GM18951 (cell line): ENCODE measurements at regions of chr6 and their contacts with region 1.

Region 1: DNA sequence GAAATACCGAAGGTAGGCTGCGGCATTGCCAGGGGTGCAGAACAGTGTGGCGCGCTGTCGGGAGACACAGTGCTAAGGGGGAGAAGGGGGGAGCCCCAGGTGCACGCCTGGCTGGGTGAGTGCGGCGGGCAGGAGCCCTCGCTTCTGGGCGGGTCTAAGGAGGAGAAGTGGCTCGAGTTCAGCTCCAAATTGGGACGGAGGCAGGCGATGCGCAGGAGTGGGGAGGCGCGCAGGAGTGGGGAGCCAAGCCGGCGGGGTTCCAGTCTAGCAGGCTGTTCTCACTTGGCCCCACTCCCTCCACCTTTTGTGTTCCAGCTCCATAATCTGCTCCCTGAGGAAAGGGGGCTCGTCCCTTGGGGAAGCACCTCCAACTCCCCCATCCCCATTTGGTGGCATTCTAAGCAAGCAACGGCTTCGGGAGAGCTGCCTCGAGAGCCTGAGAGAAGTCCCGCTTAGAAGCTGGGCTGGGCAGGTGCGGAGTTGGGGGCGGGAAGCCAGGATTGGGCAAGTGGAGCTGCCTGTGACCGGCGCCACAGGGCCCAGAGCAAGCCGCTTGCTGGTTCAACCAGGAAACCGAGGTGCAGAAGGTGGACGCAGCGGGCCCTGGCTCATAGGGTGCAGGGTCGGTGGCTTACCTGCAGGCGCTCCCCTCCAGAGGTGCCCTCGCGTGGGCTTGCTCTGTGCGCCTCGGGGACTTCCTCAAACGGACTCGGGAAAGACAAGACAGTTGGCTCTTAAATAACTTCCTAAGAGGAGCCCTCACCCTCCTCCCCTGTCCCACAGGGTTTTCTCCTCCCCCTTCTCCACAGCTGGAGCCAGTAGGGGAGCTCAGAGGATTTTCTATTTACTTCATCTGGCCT is at the start of gene F13A1:
- POLR2A ChIP-seq: peak; percentile 30

Region 2: DNA sequence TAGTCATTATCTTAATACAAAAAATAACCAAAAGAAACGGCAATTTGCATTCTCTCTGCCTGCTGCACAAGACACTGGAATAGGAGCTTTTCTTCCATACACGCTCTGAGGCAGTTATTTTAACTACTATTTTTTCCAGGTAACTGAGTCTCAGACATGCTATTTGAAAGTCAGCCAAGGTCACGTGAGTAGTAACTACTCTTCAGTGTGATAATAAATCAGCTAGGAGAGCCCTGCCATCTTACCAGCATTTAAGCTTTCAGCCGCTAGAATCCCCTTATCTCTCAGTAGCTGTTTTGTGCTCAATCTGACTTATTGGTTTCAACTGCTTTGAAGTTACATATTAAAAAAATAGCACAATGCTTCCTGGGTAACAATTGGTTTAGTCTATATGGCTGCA is 398.0 kb before region 1 on chr6:
- in situ Hi-C with region 1: no loop called
- POLR2A ChIP-seq: no peak

Region 3: DNA sequence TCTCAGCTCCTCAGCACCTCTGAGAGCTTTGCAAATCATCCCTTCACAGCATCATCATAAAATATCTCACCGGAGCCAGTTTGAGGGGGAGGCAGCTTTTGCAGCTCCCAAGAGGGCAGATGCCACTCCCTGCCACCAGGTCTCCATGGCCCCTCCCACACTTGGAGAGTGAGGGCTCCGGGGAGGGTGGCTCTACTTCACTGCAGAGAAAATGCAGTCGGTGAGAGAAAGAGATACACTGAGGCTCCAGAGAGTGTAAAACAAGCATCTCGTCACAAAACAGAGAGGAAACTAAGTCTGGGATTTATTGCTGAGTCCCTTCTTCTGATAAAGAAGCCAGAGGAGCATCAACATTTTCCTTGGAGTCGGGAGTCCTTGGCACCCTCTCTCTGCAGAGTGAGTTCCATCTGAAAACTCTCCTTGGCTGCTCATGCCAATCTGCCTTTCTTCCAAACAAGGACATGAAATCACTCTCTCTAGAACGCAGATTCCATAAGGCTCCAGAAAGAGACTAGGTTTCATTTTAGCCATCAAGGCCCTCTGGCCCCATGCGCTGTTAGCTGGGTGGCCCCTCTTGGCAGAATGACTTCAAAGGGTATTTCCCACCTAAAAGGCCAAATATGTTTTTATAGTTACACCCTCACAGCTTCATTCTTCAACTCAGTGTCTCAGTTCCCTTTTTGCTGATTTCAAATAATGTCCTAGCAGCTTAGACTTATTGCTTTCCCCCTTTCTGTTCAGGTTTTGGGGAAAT is 70.8 kb after region 1 on chr6:
- in situ Hi-C with region 1: loop called (anchors 10 kb)
- POLR2A ChIP-seq: peak; percentile 15

Region 4: GRCh38 chr6:6629402-6629801 is 309.2 kb after region 1 on chr6:
- in situ Hi-C with region 1: no loop called
- POLR2A ChIP-seq: no peak